ENCODE measurements at regions of chr5 and their contacts with region 1.

Region 1: DNA sequence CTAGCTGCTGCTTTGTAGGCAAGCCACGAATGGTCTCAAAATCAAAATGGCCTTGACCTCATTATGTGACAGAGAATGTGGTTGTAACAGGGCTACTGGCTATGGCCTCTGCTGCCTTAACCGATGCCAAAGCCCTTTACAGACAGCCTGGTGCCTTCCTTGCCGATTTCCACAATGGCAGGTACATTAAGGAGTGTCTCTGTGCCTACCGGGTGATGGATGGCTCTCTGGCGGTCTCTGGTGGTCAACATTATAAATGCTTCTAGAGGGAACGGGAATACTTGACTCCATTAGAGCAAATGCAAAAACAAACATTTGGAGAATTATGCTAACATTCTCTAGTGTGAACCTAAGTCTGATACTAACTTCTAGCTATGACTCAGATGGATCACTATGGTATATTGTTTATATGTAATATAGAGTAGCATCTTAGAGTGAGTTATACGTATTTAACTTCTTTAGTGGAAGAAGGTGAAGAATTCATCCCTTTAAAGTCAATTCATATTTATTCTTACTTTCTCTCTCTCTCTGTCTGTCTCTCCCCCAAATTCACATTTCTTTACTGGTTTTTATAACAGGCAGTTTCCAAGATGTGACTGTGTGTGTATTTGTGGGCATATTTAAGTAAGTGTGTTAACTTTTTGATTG is 52.5 kb downstream of the RPS23 start:
- DNase-seq: peak in 1 of 2 donors; percentile 60
- ATAC-seq: peak; percentile 69 to 93 (median 85)
- H3K4me3 ChIP-seq: no peak overlapping the region
- H3K27ac ChIP-seq: no peak overlapping the region
- H3K4me1 ChIP-seq: peaks cover 5% of the 10 kb centered on the region
- H3K27me3 ChIP-seq: no peaks in the 10 kb centered on the region
- CTCF ChIP-seq: peak; percentile 85

Region 2: GRCh38 chr5:82107267-82107666 is 118.4 kb before region 1 on chr5:
- intact Hi-C with region 1: loop called in 1 of 2 experiments (anchors 10 kb)
- DNase-seq: no peak
- ATAC-seq: peak in 2 of 4 donors; percentile 56 to 78
- H3K4me3 ChIP-seq: no peak overlapping the region
- H3K27ac ChIP-seq: no peak overlapping the region
- H3K4me1 ChIP-seq: peaks cover 10% of the 10 kb centered on the region
- H3K27me3 ChIP-seq: no peaks in the 10 kb centered on the region
- CTCF ChIP-seq: peak; percentile 50

Region 3: DNA sequence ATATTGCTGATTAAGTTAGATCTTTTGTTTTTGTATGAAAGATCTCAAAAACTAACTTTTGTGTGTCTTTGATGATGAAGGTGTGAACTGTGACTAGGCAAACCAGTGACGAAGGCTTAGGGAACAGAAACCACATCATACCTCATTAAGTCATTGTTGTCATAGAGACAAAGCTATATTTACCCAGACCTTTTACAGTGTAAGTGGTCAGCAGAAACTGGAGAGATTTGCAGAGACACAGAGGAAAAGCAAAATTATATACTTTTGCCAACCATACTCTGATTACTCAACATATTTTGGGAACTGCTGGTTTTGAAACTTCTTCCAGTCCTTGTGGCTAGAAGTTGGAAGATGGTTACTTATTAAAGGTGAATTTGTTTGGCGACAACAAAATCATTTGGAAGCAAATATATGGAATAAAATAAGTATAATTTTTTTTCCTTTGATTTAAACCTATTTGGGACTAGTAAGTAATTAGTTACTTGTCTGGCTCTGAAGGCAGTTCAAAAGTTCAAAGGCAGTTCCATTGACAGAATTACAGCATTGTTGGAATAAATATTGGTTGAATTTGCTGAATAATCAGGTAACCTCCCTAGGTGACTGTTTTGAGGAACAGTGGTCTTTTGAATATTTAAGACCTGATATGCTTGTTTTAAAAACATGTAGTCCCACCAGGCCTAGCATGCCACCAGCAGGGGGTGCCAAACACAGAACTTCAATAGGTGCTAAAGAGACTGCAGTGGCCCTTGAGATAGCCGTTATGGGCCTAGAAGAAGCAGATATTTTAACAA is 51.3 kb before region 1 on chr5:
- intact Hi-C with region 1: loop called in 1 of 2 experiments (anchors 10 kb)
- DNase-seq: peak; percentile 60 to 63
- ATAC-seq: peak; percentile 49 to 84 (median 68)
- H3K4me3 ChIP-seq: no peak overlapping the region
- H3K27ac ChIP-seq: no peak overlapping the region
- H3K4me1 ChIP-seq: no peaks in the 10 kb centered on the region
- H3K27me3 ChIP-seq: no peaks in the 10 kb centered on the region
- CTCF ChIP-seq: peak; percentile 53

Measured in psoas muscle (tissue), 8 donors.